Left lung (tissue), 14 donors: ENCODE measurements at regions of chr16 and their contacts with region 1.

Region 1: GRCh38 chr16:27232061-27232900 is 29.0 kb downstream of the KDM8 start:
- DNase-seq: peak in 1 of 4 donors; percentile 32
- ATAC-seq: no peak
- H3K4me3 ChIP-seq: no peak overlapping the region
- H3K27ac ChIP-seq: no peak overlapping the region
- H3K4me1 ChIP-seq: peaks cover 15 to 48% of the 10 kb centered on the region in 2 donors
- H3K27me3 ChIP-seq: no peaks in the 10 kb centered on the region
- CTCF ChIP-seq: no peak

Region 2: DNA sequence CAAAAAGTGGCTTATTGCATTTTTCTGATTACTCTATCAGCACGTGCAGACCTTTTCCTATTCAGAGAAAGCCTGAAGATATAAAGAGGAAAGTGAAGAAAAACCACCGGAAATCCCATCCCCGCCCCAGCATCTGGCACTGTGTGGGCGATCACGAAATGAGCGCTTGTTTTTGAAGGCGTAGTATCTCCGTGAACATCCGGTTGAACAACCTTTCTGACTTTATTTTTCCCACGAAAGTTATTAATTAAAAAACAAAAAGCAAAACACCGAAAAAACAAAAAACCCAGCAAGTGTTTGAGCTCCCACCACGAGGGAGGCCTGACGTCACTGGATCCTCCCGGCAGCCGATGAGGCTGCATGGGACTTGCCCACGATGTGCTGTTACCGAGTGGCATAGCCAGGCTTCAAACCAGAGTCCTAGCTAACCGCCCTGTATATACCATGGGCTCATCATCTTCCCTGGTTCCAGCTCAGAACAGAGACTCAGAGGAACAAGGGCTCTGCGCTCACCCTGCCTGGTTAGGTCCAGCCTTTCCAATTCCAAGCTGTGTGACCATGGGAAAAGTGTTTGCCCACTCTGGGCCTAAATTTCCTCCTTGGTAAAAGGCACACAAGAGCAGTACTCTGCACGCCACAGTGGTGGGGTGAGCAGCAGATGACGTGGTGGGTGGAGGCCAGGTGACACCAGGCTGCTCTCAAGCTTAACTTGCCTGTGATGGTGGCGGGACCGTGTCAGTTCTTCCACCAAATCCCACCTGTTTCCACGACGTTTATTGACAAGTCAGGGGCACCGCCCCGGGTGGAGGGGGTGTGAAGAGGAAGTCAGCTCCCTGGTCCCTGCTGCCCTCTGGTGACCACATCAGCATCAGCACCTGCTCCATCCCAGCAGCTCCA is 135.4 kb after region 1 on chr16:
- intact Hi-C with region 1: loop called in 1 of 2 experiments (anchors 5 kb)
- DNase-seq: peak; percentile 37 to 93 (median 74)
- ATAC-seq: peak; percentile 84
- H3K4me3 ChIP-seq: peak overlapping the region in 1 of 2 donors; percentile 15
- H3K27ac ChIP-seq: peak overlapping the region in 1 of 2 donors; percentile 78
- H3K4me1 ChIP-seq: peaks cover 9 to 44% of the 10 kb centered on the region in 2 donors
- H3K27me3 ChIP-seq: no peaks in the 10 kb centered on the region
- CTCF ChIP-seq: peak; percentile 81 to 87